Dorsolateral prefrontal cortex (tissue), 120 donors: ENCODE measurements at regions of chr9 and their contacts with region 1.

Region 1: GRCh38 chr9:129495534-129496325 is 125.2 kb downstream of the C9orf50 start:
- DNase-seq: peak; percentile 93 to 98 (median 96)
- H3K4me3 ChIP-seq: peak overlapping the region; percentile 48 to 92 (median 72)
- H3K27ac ChIP-seq: peak overlapping the region; percentile 88 to 100 (median 99)
- H3K27me3 ChIP-seq: no peaks in the 10 kb centered on the region
- CTCF ChIP-seq: peak in 2 of 56 donors; percentile 10 to 11

Region 2: DNA sequence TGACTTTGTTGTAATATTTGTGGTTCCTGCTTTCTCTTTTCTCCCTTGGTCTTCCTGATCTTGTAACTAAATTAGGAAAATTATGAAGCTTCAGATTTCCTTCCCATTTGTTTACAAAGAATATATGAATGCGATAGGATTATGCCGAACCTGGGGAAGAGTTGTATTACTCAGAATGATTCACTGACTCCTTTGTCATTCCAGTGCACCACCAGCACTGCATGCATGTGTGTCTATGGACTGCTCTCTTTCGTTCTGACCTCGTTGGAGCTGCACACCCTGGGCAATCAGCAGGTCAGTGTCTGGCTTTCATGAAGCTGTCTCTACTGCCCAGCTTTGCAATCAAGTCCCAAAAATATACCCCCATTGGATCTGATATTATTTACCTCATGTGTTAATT is 522.8 kb before region 1 on chr9:
- intact Hi-C with region 1: no loop called
- DNase-seq: no peak
- H3K4me3 ChIP-seq: no peak overlapping the region
- H3K27ac ChIP-seq: no peak overlapping the region
- H3K27me3 ChIP-seq: no peaks in the 10 kb centered on the region
- CTCF ChIP-seq: no peak

Region 3: DNA sequence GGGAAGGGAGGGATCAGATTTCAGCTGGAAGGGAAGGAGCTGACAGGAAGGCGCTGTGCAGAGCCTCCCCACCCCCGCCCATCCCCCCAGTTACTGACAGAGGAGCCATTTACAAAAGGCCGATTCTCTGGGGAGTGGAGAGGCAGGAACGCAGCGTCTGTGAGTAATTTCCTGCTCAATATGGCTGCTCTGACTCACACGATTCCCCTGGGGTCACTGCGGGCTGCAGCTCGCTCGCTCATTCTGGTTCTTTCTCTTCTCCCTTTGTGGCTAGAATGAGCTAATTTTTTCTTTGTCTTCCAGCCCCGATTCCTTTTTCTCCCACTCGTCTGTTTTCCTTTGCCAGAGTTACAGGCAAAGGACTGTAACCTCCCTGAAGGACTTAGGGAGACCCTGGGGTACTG is 355.7 kb before region 1 on chr9:
- intact Hi-C with region 1: loop called (anchors 5 kb)
- DNase-seq: peak; percentile 59 to 95 (median 86)
- H3K4me3 ChIP-seq: peak overlapping the region; percentile 13 to 66 (median 47)
- H3K27ac ChIP-seq: peak overlapping the region; percentile 98 to 100 (median 100)
- H3K27me3 ChIP-seq: no peaks in the 10 kb centered on the region
- CTCF ChIP-seq: peak in 16 of 56 donors; percentile 6 to 38 (median 17)

Region 4: DNA sequence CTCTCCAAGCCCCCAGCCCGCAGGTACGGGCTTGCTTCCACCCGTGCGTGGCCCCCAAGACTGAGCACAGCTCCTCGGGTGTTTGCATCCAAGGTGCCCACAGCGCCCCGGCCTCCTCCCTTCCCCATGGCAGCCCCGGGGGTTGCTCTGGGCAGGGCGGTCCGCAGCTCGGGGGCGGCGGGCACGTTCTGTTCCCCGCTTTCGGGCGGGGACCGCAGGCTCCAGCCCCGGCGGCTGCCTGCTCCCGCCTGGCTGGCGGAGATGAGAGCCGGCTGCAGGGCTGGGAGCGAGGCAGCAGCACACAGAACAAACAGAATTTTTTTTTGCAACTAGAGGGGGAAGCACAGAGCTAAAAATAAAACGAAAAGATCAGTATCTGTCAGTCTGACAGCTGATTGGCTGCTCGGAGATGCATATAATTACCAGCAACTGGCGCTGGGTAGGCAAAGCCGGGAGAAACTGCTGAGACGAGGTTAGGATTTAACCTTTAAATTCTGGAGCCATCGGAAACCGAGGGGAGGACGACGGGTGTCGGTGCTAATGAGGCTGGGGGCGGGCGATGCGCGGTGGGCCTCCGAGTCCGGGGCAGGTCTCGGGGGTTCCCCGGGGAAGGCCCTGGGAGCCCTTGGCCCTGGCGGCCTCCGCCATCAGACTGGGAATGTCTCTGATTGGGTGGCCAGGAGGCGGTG is 175.0 kb before region 1 on chr9:
- intact Hi-C with region 1: loop called in 1 of 2 experiments (anchors 5 kb)
- DNase-seq: peak in 9 of 10 donors; percentile 63 to 83 (median 73)
- H3K4me3 ChIP-seq: peak overlapping the region; percentile 27 to 72 (median 55)
- H3K27ac ChIP-seq: peak overlapping the region; percentile 42 to 99 (median 95)
- H3K27me3 ChIP-seq: no peaks in the 10 kb centered on the region
- CTCF ChIP-seq: peak in 44 of 56 donors; percentile 10 to 60 (median 40)

Region 5: DNA sequence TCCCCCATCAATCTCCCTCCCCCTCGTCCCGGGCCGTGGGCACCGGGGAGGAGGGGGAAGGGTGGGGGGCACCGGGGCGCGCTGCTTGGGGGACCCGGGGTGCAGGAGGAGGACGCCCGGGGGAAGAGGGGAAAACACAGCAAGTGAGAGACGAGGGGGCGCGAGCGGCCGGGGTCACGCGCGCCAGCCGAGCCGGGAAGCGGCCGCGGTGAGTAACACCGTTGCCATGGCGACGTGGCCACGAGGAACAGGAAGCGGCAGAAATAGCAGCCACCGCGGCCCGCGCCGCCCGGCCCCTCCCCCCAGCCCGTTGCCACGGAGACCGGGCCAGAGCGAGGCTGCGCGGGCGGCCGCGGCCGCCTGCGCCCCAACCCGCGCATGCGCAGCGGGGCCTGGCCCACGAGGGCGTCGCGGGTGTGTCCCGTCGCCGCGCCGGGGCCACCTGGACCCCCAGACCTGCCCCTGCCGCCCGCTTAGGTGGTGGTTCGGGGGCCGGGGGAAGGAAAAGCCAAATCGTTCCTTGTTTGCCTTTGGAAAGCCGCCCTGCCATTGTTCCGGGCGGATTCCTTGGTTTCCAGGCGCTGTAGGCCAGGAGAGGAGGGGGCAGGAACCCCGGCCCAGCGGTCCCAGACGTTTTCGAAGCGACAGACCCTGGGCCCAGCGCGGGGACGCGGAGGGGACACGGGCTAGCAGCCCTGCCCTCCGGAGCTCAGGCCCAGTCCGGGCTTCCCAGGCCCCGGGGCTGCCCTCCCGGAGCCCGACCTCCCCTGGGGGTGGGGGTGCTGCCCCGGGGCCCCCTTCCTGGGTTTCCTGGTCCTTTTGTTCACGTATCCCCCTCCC is 82.0 kb before region 1 on chr9:
- intact Hi-C with region 1: loop called in 1 of 2 experiments (anchors 2 kb)
- DNase-seq: peak; percentile 97 to 99 (median 98)
- H3K4me3 ChIP-seq: peak overlapping the region; percentile 47 to 89 (median 71)
- H3K27ac ChIP-seq: peak overlapping the region; percentile 91 to 100 (median 99)
- H3K27me3 ChIP-seq: no peaks in the 10 kb centered on the region
- CTCF ChIP-seq: peak in 13 of 56 donors; percentile 8 to 50 (median 21)

Region 6: GRCh38 chr9:129460323-129461261 is 35.1 kb before region 1 on chr9:
- intact Hi-C with region 1: loop called in 1 of 2 experiments (anchors 5 kb)
- DNase-seq: peak; percentile 90 to 98 (median 96)
- H3K4me3 ChIP-seq: peak overlapping the region; percentile 30 to 71 (median 55)
- H3K27ac ChIP-seq: peak overlapping the region; percentile 74 to 100 (median 99)
- H3K27me3 ChIP-seq: no peaks in the 10 kb centered on the region
- CTCF ChIP-seq: peak in 23 of 56 donors; percentile 8 to 58 (median 31)

Region 7: GRCh38 chr9:129550199-129550839 is 54.6 kb after region 1 on chr9:
- intact Hi-C with region 1: loop called (anchors 2 to 5 kb)
- DNase-seq: peak; percentile 69 to 92 (median 81)
- H3K4me3 ChIP-seq: peak overlapping the region; percentile 33 to 78 (median 68)
- H3K27ac ChIP-seq: peak overlapping the region; percentile 75 to 100 (median 97)
- H3K27me3 ChIP-seq: no peaks in the 10 kb centered on the region
- CTCF ChIP-seq: peak in 23 of 56 donors; percentile 5 to 43 (median 16)

Region 8: GRCh38 chr9:129569502-129570449 is 74.0 kb after region 1 on chr9:
- intact Hi-C with region 1: loop called in 1 of 2 experiments (anchors 5 kb)
- DNase-seq: peak in 1 of 10 donors; percentile 15
- H3K4me3 ChIP-seq: peak overlapping the region in 34 of 59 donors; percentile 48 to 78 (median 65)
- H3K27ac ChIP-seq: peak overlapping the region; percentile 45 to 96 (median 91)
- H3K27me3 ChIP-seq: no peaks in the 10 kb centered on the region
- CTCF ChIP-seq: peak in 21 of 56 donors; percentile 9 to 40 (median 23)